ENCODE measurements at regions of chr18 and their contacts with region 1.

Region 1: DNA sequence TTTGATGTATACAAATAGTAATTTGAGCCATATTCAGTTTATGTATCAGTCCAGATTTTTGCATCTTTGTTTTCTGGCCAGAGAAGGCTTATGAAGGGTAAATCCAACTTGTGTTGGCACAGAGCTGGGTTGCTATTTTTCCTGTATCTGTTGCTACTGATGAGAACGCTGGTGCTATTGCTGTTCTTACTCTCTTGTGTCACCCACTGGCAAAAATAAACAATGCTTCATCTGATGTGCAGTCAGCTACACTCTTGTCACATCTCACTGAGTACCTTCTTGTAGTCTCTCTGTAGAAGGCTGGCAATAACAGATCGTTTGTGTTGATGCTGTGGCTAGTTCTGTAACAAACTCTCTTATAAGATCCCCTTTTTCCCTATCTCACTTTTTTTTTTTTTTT is 323.4 kb downstream of the CDH19 start:
- DNase-seq: no peak
- ATAC-seq: no peak
- H3K4me3 ChIP-seq: no peak overlapping the region
- H3K27ac ChIP-seq: no peak overlapping the region
- H3K4me1 ChIP-seq: no peaks in the 10 kb centered on the region
- H3K27me3 ChIP-seq: no peaks in the 10 kb centered on the region
- CTCF ChIP-seq: no peak

Region 2: GRCh38 chr18:67951137-67951536 is 1670.7 kb after region 1 on chr18:
- intact Hi-C with region 1: loop called in 1 of 2 experiments (anchors 5 kb)
- DNase-seq: no peak
- ATAC-seq: no peak
- H3K4me3 ChIP-seq: no peak overlapping the region
- H3K27ac ChIP-seq: no peak overlapping the region
- H3K4me1 ChIP-seq: no peaks in the 10 kb centered on the region
- H3K27me3 ChIP-seq: no peaks in the 10 kb centered on the region
- CTCF ChIP-seq: no peak